ENCODE measurements at regions of chr19 and their contacts with region 1.

Region 1: GRCh38 chr19:9140159-9140874 is at the start of gene ZNF317:
- DNase-seq: peak; percentile 80 to 96 (median 90)
- ATAC-seq: peak; percentile 88
- H3K4me3 ChIP-seq: peak within 1 kb of the TSS; percentile 82 to 93
- H3K4me3 Mint-ChIP-seq: peak within 1 kb of the TSS; percentile 95
- H3K27ac ChIP-seq: peak within 1 kb of the TSS; percentile 86 to 88
- H3K27ac Mint-ChIP-seq: peak within 1 kb of the TSS; percentile 98
- H3K4me1 ChIP-seq: peaks cover 24% of the 10 kb centered on the region
- H3K4me1 Mint-ChIP-seq: peaks cover 46% of the 10 kb centered on the region
- H3K27me3 ChIP-seq: peaks cover 0 to 3% of the 10 kb centered on the region in 2 experiments
- H3K27me3 Mint-ChIP-seq: peaks cover 1% of the 10 kb centered on the region
- CTCF ChIP-seq: no peak
- total RNA-seq, gene ZNF317: 127 to 130 TPM

Region 2: DNA sequence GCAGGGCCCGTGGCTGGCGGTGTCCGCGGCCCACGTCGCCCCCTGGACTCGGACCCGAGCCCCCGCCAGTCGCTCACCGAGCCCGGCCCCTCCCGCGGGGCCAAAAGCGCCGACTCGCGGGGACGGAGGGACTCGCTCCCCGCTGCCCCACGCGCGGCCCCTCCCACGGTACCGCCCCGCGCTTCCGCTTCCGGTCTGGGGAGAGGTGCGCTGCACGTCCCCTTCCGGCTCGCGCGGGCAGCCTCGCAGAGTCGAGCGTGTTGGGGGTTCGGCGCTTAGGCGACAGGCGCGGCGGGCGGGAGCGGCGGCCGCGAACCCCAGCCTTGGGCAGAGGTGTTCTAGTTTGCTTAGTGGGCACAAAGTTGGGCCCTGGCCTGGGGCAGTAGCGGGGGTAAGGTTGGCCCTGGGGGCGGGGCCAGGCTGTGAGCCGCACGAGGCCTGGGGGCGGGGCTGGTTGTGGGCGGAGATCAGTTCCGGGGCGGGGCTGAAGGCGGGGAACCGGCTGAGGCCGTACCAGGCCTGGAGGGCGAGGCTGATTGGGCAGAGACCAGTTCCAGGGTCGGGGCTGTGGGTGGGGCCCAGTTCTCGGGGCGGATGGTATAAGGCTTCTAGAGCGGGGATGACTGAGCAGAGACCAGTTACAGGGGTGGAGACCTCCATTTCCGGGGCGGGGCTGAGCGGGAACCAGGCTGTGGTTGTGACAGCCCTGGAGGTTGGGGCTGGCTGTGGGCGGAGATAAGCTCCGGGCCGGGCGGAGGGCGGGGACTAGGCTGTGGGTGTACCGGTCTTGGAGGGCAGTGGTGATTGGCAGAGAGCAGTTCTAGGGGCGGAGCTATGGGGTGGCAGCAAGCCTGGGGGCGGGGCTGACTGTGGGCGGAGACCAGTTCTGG is 307.9 kb before region 1 on chr19 and contains the starts of genes MBD3L1 and ZNF558:
- CTCF ChIA-PET with region 1: no interaction called
- POLR2A ChIA-PET with region 1: no interaction called
- intact Hi-C with region 1: loop called in 1 of 2 experiments (anchors 5 kb)
- DNase-seq: peak; percentile 97 to 100 (median 99)
- ATAC-seq: peak; percentile 89
- H3K4me3 ChIP-seq: peak within 1 kb of the TSS; percentile 86 to 93
- H3K4me3 Mint-ChIP-seq: peak within 1 kb of the TSS; percentile 92
- H3K27ac ChIP-seq: peak within 1 kb of the TSS; percentile 91
- H3K27ac Mint-ChIP-seq: peak within 1 kb of the TSS; percentile 96
- H3K4me1 ChIP-seq: peaks cover 13% of the 10 kb centered on the region
- H3K4me1 Mint-ChIP-seq: peaks cover 27% of the 10 kb centered on the region
- H3K27me3 ChIP-seq: no peaks in the 10 kb centered on the region
- H3K27me3 Mint-ChIP-seq: no peaks in the 10 kb centered on the region
- CTCF ChIP-seq: no peak
- total RNA-seq, gene MBD3L1: not detected
- total RNA-seq, gene ZNF558: 28.1 to 32.9 TPM

Region 3: GRCh38 chr19:9323919-9324583 is 183.7 kb after region 1 on chr19 and contains the start of gene ZNF559:
- CTCF ChIA-PET with region 1: no interaction called
- POLR2A ChIA-PET with region 1: no interaction called
- intact Hi-C with region 1: loop called (anchors 1 to 2 kb)
- DNase-seq: peak; percentile 95 to 99 (median 98)
- ATAC-seq: peak; percentile 95
- H3K4me3 ChIP-seq: peak within 1 kb of the TSS; percentile 75 to 78
- H3K4me3 Mint-ChIP-seq: peak within 1 kb of the TSS; percentile 88
- H3K27ac ChIP-seq: peak within 1 kb of the TSS; percentile 62 to 83
- H3K27ac Mint-ChIP-seq: peak within 1 kb of the TSS; percentile 87
- H3K4me1 ChIP-seq: peaks cover 12% of the 10 kb centered on the region
- H3K4me1 Mint-ChIP-seq: peaks cover 38% of the 10 kb centered on the region
- H3K27me3 ChIP-seq: no peaks in the 10 kb centered on the region
- H3K27me3 Mint-ChIP-seq: no peaks in the 10 kb centered on the region
- CTCF ChIP-seq: peak; percentile 39
- total RNA-seq, gene ZNF559: 4.0 to 4.5 TPM

Region 4: DNA sequence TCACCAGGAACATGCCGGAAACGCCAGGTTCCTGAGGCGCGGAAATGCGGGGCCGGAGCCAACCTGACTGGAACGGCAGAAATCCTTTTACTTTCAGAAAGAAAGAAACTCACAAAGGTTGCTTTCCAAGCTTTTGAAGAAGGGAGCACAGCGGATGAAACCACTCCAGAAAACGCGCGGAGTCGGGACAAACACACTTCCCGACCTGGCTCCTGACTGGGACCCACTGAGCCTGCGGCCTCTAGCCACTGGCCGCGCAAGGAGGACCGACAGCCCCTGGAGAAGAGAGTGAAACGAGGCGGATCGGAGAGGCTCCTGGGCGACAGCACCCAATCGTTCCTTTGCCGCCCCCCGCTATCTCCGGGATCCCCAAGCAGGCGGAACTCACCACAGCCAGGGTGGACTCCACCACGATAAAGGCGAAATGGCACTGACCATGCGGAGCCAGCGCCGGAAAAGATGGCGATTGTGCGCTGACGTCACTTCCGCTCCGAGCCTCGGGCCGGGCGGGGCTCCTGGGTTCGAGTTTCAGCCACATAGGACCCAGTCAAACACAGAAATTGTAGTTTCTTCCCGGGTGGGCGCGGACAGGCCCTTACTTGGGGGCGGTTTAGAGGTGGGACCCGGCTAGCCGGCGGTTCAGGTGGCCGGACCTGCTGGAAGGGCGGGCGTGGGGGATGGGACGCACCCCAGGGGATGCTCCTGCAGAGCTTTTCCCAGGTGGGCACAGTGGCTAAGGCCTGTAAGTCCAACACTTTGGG is 443.9 kb after region 1 on chr19 and contains the start of gene ZNF121:
- CTCF ChIA-PET with region 1: no interaction called
- POLR2A ChIA-PET with region 1: no interaction called
- intact Hi-C with region 1: loop called in 1 of 2 experiments (anchors 1 kb)
- DNase-seq: peak; percentile 57 to 89 (median 81)
- ATAC-seq: peak; percentile 75
- H3K4me3 ChIP-seq: peak within 1 kb of the TSS; percentile 95 to 98
- H3K4me3 Mint-ChIP-seq: peak within 1 kb of the TSS; percentile 95
- H3K27ac ChIP-seq: peak within 1 kb of the TSS; percentile 96 to 97
- H3K27ac Mint-ChIP-seq: peak within 1 kb of the TSS; percentile 95
- H3K4me1 ChIP-seq: peaks cover 21% of the 10 kb centered on the region
- H3K4me1 Mint-ChIP-seq: peaks cover 39% of the 10 kb centered on the region
- H3K27me3 ChIP-seq: no peaks in the 10 kb centered on the region
- H3K27me3 Mint-ChIP-seq: peaks cover 2% of the 10 kb centered on the region
- CTCF ChIP-seq: no peak
- total RNA-seq, gene ZNF121: 40.6 to 43.2 TPM

Region 5: GRCh38 chr19:9785367-9786331 is 645.3 kb after region 1 on chr19:
- CTCF ChIA-PET with region 1: no interaction called
- POLR2A ChIA-PET with region 1: no interaction called
- intact Hi-C with region 1: loop called in 1 of 2 experiments (anchors 5 kb)
- DNase-seq: peak; percentile 90 to 98 (median 97)
- ATAC-seq: peak; percentile 82
- H3K4me3 ChIP-seq: peak overlapping the region; percentile 95 to 97
- H3K4me3 Mint-ChIP-seq: peak overlapping the region; percentile 88
- H3K27ac ChIP-seq: peak overlapping the region; percentile 87 to 98
- H3K27ac Mint-ChIP-seq: peak overlapping the region; percentile 95
- H3K4me1 ChIP-seq: peaks cover 10% of the 10 kb centered on the region
- H3K4me1 Mint-ChIP-seq: peaks cover 29% of the 10 kb centered on the region
- H3K27me3 ChIP-seq: no peaks in the 10 kb centered on the region
- H3K27me3 Mint-ChIP-seq: no peaks in the 10 kb centered on the region
- CTCF ChIP-seq: no peak

Region 6: DNA sequence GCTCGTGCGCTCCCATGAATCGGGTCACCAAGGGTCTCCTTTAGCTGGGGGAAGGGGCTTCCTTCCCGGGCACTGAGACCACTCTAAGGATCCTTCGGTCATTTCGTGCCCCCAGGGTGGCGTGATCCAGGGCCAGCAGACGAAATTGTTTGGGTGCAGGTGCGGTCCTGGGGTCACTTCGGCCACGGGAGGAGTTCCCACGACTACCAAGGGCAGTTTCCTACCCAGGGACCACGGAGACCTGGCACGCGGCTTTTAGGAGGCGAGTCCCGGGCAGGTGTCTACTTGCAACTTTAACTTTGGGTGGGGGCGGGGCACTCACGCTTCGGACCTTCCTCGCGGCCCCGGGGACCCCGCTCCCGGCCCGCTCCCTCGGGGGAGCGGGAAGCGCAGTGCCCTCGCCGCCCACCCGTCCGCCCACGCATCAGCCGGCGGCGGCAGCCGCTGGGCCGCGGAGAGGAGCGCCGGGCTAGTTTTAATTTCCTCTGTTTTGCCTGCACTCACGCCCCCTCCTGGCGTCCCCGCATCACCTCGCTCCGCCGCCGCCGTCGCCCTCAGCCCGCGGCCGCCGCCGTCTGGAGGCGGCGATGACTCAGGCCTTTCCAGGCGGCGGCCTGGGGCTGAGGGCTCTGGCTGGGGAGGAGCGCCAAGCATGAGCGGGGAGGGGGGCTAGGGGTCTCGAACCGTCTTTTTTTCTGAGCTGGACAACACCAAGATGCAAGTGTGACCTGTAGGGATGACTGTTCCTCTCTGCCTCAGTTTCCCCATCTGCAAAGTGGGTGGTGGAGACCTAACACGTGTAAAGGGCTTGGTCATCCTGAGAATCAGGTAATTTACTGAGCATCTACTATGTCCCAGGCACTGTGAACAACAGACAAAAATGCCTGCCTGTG is 774.2 kb after region 1 on chr19:
- CTCF ChIA-PET with region 1: no interaction called
- POLR2A ChIA-PET with region 1: no interaction called
- intact Hi-C with region 1: loop called in 1 of 2 experiments (anchors 5 kb)
- DNase-seq: peak; percentile 69 to 89 (median 81)
- ATAC-seq: peak; percentile 92
- H3K4me3 ChIP-seq: peak overlapping the region; percentile 49 to 66
- H3K4me3 Mint-ChIP-seq: peak overlapping the region; percentile 73
- H3K27ac ChIP-seq: no peak overlapping the region
- H3K27ac Mint-ChIP-seq: no peak overlapping the region
- H3K4me1 ChIP-seq: peaks cover 15% of the 10 kb centered on the region
- H3K4me1 Mint-ChIP-seq: peaks cover 8% of the 10 kb centered on the region
- H3K27me3 ChIP-seq: peaks cover 0 to 15% of the 10 kb centered on the region in 2 experiments
- H3K27me3 Mint-ChIP-seq: peaks cover 30% of the 10 kb centered on the region
- CTCF ChIP-seq: peak; percentile 73